Sigmoid colon (tissue), 7 donors: ENCODE measurements at regions of chr11 and their contacts with region 1.

Region 1: GRCh38 chr11:70397983-70398833 is at the start of gene CTTN:
- DNase-seq: peak; percentile 93
- H3K4me3 ChIP-seq: peak within 1 kb of the TSS; percentile 84 to 98 (median 88)
- H3K27ac ChIP-seq: peak within 1 kb of the TSS; percentile 85 to 95 (median 92)
- H3K4me1 ChIP-seq: peaks cover 0 to 52% (median 41%) of the 10 kb centered on the region in 4 donors
- H3K27me3 ChIP-seq: no peaks in the 10 kb centered on the region
- CTCF ChIP-seq: no peak
- EP300 ChIP-seq: no peak
- POLR2A ChIP-seq: peak; percentile 22 to 48
- total RNA-seq, gene CTTN: 128 to 312 (median 157) TPM

Region 2: GRCh38 chr11:69670158-69670845 is 727.9 kb before region 1 on chr11:
- intact Hi-C with region 1: loop called (anchors 10 kb)
- DNase-seq: peak; percentile 92
- H3K4me3 ChIP-seq: no peak overlapping the region
- H3K27ac ChIP-seq: peak overlapping the region; percentile 54 to 71 (median 62)
- H3K4me1 ChIP-seq: peaks cover 0 to 32% (median 29%) of the 10 kb centered on the region in 4 donors
- H3K27me3 ChIP-seq: no peaks in the 10 kb centered on the region
- CTCF ChIP-seq: peak; percentile 75 to 94 (median 88)
- EP300 ChIP-seq: no peak
- POLR2A ChIP-seq: no peak

Region 3: GRCh38 chr11:70202898-70203748 is 195.1 kb before region 1 on chr11 and contains the start of gene FADD:
- intact Hi-C with region 1: loop called (anchors 5 kb)
- DNase-seq: peak; percentile 94
- H3K4me3 ChIP-seq: peak within 1 kb of the TSS; percentile 77 to 95 (median 82)
- H3K27ac ChIP-seq: peak within 1 kb of the TSS; percentile 92 to 93 (median 92)
- H3K4me1 ChIP-seq: peaks cover 0 to 25% (median 21%) of the 10 kb centered on the region in 4 donors
- H3K27me3 ChIP-seq: no peaks in the 10 kb centered on the region
- CTCF ChIP-seq: no peak
- EP300 ChIP-seq: no peak
- POLR2A ChIP-seq: peak; percentile 46 to 65
- total RNA-seq, gene FADD: 11.5 to 24.1 (median 14.6) TPM

Region 4: GRCh38 chr11:70270104-70270876 is 127.9 kb before region 1 on chr11 and contains the start of gene PPFIA1:
- intact Hi-C with region 1: loop called (anchors 2 kb)
- DNase-seq: peak; percentile 97
- H3K4me3 ChIP-seq: peak within 1 kb of the TSS; percentile 76 to 98 (median 96)
- H3K27ac ChIP-seq: peak within 1 kb of the TSS; percentile 85 to 89 (median 87)
- H3K4me1 ChIP-seq: peaks cover 0 to 30% (median 22%) of the 10 kb centered on the region in 4 donors
- H3K27me3 ChIP-seq: no peaks in the 10 kb centered on the region
- CTCF ChIP-seq: no peak
- EP300 ChIP-seq: peak in 1 of 4 donors; percentile 13
- POLR2A ChIP-seq: peak in 1 of 2 donors; percentile 37
- total RNA-seq, gene PPFIA1: 43.4 to 62.1 (median 51.2) TPM

Region 5: DNA sequence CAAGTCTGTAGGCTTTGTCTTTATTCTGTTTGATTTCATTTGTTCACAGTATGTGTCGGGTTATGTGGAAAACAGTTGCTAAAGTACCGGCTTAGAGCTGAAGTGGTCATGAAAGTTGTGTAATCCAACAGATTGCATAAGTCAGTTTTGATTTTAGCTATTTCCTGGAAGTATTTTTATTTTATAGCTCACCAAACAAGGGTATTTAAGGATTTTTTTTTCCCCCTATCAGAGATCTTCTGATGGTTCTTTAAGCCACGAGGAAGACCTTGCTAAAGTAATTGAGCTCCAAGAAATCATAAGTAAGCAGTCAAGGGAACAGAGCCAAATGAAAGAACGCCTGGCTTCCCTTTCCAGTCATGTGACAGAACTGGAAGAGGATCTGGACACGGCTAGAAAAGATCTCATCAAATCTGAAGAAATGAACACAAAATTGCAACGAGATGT is 71.8 kb before region 1 on chr11:
- intact Hi-C with region 1: loop called (anchors 5 kb)
- DNase-seq: peak; percentile 75
- H3K4me3 ChIP-seq: no peak overlapping the region
- H3K27ac ChIP-seq: peak overlapping the region; percentile 20 to 71 (median 59)
- H3K4me1 ChIP-seq: peaks cover 0 to 32% (median 13%) of the 10 kb centered on the region in 4 donors
- H3K27me3 ChIP-seq: no peaks in the 10 kb centered on the region
- CTCF ChIP-seq: no peak
- EP300 ChIP-seq: no peak
- POLR2A ChIP-seq: no peak

Region 6: DNA sequence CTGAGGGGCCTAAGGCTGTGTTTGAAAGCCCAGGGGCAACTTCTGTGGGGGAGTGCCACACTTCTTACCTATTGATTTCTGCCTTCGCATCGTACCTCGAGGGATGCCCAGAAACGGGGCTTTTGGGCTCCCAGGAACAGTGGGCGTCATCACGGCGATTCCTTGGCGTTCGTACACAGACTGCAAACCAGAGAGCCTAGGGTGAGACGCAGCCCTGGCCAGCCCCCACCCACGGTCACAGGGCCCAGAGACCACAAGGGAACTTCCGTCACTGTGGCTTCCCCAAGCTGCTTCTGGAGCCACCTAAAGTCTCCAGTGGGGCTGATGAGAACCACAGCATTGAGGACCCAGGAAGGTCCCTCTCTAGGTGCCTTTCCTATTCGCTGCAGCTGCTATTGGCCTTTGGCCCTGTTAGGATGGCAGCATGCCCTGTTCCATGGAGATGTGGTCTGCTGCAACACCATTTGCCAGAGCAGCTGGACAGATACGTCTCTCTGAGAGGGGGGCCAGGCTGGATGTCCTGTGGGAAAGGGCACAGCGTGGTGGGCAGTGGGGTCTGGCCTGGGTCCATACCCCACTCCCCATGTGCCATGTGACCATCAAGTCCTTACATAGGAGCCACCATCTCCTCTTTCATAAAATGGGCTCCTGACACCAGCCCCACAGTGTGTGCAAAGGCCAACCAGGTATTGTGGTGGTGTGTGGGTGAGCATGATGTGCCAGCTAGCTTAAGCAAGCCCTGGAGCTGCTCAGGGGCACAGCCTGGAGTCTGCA is 92.2 kb after region 1 on chr11:
- intact Hi-C with region 1: no loop called
- DNase-seq: peak; percentile 40
- H3K4me3 ChIP-seq: no peak overlapping the region
- H3K27ac ChIP-seq: no peak overlapping the region
- H3K4me1 ChIP-seq: no peaks in the 10 kb centered on the region
- H3K27me3 ChIP-seq: no peaks in the 10 kb centered on the region
- CTCF ChIP-seq: no peak
- EP300 ChIP-seq: no peak
- POLR2A ChIP-seq: no peak